ENCODE measurements at regions of chr11 and their contacts with region 1.

Region 1: DNA sequence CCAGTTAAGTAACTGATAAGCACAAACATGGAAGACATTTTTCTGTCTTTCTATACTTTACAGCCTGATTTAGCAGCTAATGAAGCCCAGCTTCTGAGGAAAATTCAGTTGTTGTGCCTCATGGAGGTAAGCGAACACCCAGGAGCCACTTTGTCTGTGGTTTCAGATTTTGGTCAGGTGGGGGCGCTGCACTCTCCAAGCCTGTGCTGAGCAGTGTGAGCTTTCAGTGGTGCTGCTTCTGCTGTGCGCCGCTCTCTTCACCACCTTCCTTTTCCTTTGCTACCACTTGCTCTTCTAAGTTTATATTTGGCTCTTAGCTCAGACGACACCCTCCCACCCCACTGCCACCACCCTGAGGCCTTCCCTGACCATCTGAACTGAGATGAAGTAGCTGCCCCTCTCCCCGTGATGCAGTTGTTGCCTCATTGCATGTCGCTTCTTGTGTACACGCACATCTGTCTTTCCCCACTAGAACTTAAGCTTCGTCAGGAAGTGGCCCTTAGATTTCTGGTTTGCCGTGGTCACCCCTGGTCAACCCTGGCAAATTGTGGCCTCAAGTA is 14.0 kb downstream of the PSMD13 start:
- DNase-seq: peak; percentile 91
- ATAC-seq: peak; percentile 98
- H3K4me3 Mint-ChIP-seq: no peak overlapping the region
- H3K27ac Mint-ChIP-seq: peak overlapping the region; percentile 82
- H3K4me1 Mint-ChIP-seq: peaks cover 18% of the 10 kb centered on the region
- H3K27me3 Mint-ChIP-seq: no peaks in the 10 kb centered on the region
- CTCF ChIP-seq: peak; percentile 83

Region 2: DNA sequence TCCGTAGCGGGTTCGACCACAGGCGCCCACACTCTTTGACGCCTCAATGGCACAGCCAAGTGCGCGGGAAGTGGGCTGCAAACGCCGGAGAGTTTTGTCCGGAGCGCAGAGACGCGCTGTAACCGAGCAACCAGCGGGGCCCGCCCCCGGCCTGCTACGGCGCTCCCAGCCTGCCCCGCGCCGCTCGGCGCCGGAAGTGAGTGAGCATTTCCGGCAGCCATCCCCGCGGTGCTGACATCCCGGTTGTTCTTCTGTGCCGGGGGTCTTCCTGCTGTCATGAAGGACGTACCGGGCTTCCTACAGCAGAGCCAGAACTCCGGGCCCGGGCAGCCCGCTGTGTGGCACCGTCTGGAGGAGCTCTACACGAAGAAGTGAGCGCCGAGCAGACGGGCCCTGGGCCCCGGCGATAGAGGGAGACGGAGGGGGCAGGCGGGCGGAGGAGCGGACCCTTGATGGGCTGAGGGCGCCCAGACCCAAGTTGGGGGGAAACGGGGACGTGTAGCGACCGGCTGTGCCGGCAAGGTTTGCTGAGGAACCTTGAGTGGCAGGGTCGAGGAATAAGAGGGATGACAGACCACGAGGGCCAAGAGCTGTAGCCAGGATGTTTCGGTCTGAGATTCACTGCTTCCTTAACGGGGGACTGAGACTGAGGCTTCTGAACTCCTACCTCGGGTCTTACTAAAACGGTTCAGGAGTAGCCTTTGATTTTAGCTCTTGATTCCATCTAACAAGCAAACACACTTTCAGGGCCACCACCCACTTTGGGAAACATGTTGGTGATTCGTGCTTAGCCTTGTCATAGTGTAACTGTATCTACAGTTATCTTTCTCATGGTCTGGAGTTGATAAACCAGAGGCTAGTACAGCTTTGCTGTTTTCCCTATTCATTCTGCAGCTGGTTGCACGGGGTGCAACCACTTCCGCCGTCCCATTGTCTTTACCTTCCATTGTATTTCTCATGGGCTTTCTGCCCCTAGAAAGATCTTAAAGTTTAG is 13.7 kb before region 1 on chr11 and contains the start of gene PSMD13:
- CTCF ChIA-PET with region 1: interaction called, 68 read pairs
- POLR2A ChIA-PET with region 1: interaction called, 24 read pairs
- intact Hi-C with region 1: no loop called
- DNase-seq: peak; percentile 94
- ATAC-seq: peak; percentile 87
- H3K4me3 Mint-ChIP-seq: peak within 1 kb of the TSS; percentile 95
- H3K27ac Mint-ChIP-seq: peak within 1 kb of the TSS; percentile 99
- H3K4me1 Mint-ChIP-seq: peaks cover 43% of the 10 kb centered on the region
- H3K27me3 Mint-ChIP-seq: no peaks in the 10 kb centered on the region
- CTCF ChIP-seq: no peak
- total RNA-seq, gene PSMD13: 220 to 228 TPM

Region 3: DNA sequence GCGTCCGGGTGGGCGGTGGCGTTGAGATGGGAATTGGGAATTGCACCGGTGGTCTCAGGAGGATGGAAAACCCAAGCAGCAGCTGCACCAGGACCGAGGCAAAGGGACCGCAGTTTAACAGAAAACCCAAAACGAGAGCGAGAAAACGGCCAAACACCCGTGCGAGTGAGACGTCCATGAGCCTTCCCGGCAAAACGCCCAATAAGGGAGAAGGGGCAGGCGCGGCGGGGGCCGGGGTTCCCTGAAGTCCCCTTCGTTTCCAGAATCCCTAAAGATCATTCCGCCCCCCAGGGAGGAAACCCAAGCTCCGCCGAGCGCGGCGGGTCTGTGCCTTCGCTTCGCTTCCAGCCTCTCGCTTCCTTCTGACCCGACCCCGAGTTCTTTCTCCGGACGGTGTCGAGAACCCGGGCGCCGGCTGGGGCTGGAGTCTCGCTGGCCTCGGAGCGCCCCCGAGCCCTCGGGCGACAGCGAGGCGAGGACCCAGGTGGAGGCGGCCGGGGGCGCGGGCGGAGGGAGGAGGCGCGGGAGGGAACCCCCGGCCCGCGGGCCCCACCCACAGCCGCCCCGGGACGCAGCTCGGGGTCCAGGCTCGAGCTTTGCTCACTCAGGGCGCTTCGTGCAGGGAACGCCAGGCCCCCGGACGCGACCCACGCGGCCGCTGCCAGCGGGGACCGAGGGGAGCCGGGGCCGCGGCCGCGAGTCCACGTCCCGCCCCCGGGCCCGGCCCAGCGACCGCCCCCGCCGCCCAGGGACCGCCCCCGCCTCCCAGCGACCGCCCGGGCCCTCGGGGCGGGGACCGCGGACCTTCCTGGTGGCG is 37.7 kb after region 1 on chr11 and contains the start of gene PGGHG:
- CTCF ChIA-PET with region 1: interaction called, 71 read pairs
- POLR2A ChIA-PET with region 1: interaction called, 3 read pairs
- intact Hi-C with region 1: no loop called
- DNase-seq: peak; percentile 56
- ATAC-seq: peak; percentile 14
- H3K4me3 Mint-ChIP-seq: peak within 1 kb of the TSS; percentile 97
- H3K27ac Mint-ChIP-seq: peak within 1 kb of the TSS; percentile 98
- H3K4me1 Mint-ChIP-seq: peaks cover 51% of the 10 kb centered on the region
- H3K27me3 Mint-ChIP-seq: no peaks in the 10 kb centered on the region
- CTCF ChIP-seq: no peak
- total RNA-seq, gene PGGHG: 298 to 308 TPM

Region 4: GRCh38 chr11:313787-314547 is 63.1 kb after region 1 on chr11 and contains the start of gene IFITM1:
- CTCF ChIA-PET with region 1: interaction called, 18 read pairs
- POLR2A ChIA-PET with region 1: interaction called, 7 read pairs
- intact Hi-C with region 1: no loop called
- DNase-seq: peak; percentile 79
- ATAC-seq: peak; percentile 45
- H3K4me3 Mint-ChIP-seq: peak within 1 kb of the TSS; percentile 83
- H3K27ac Mint-ChIP-seq: peak within 1 kb of the TSS; percentile 91
- H3K4me1 Mint-ChIP-seq: peaks cover 34% of the 10 kb centered on the region
- H3K27me3 Mint-ChIP-seq: no peaks in the 10 kb centered on the region
- CTCF ChIP-seq: no peak
- total RNA-seq, gene IFITM1: 296 to 304 TPM

Region 5: DNA sequence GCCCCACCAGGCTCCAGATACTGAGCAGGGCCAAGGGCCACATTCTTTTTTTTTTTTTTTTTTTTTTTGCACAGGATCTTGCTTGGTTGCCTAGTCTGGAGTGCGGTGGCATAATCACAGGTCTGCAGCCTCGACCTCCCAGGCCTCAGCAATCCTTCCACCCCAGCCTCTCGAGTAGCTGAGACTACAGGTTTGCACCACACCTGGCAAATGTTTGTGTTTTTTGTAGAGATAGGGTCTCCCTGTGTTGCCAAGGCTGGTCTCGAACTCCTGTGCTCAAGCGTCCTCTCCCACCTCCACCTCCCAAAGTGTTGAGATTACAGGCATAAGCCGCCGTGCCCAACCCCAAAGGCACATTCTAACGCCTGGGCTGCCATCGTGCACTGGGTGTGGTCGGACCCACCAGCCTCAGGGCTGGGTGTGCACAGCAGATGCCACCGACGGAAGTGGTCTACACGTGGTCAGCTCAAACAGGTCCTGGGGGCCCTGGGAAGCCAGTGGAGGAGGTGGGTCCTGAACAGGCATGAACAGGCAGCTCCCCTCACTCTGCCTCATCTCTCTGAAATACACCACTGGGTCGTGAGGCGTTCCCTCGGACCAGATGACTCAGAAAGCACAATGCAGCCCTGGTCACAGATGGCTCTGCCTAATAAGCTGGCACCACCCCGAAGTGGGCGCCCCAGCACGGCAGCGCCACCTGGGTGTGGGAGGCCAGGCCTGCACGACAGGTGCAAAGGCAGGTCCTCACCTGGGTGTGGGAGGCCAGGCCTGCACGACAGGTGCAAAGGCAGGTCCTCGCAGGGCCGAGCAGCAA is 113.3 kb after region 1 on chr11:
- CTCF ChIA-PET with region 1: interaction called, 18 read pairs
- POLR2A ChIA-PET with region 1: interaction called, 5 read pairs
- intact Hi-C with region 1: no loop called
- DNase-seq: peak; percentile 72
- ATAC-seq: peak; percentile 81
- H3K4me3 Mint-ChIP-seq: no peak overlapping the region
- H3K27ac Mint-ChIP-seq: no peak overlapping the region
- H3K4me1 Mint-ChIP-seq: peaks cover 7% of the 10 kb centered on the region
- H3K27me3 Mint-ChIP-seq: peaks cover 27% of the 10 kb centered on the region
- CTCF ChIP-seq: peak; percentile 65

Region 6: DNA sequence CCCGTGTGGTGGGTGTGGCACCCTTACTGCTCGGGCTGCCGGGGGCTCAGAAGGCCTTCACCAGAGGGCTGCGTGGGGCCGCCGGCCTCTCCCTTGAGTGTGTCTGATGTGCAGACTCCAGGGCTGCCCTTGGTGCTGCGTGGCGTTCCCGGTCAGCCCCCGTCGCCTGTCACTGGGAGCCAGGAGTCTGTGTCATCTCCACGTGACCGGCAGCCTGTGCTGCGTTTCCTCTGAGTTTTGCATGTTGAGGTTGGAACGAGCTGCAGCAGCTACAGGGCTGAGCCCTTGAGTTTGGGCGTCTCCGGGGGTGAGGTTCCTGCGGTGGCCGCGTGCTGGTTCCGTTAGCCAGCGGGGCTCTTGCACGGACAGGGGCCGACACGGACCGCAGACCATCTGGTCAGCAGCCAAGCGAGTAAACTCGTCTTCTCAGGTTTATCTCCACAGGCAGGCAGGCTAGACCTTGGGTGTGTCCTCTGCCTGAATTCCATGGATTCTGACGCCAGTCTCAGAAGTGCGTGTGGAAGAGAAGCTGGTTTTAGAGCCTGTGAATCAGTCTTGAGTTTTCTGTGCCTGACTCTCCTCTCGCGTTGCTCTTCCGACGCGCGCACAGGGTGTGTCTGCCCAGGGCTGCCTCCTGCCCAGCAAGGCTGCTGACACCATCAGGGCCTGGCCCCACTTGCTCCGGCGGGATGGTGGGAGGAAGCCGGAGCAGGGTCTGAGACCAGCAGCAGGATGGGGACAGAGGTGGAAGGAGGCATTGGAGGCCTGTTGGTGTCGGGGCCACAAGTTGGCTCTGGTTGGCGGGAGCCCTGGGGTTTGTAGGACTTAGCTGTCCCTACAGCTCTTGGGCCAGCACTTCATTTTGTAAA is 209.7 kb after region 1 on chr11:
- CTCF ChIA-PET with region 1: no interaction called
- POLR2A ChIA-PET with region 1: no interaction called
- intact Hi-C with region 1: no loop called
- DNase-seq: no peak
- ATAC-seq: no peak
- H3K4me3 Mint-ChIP-seq: no peak overlapping the region
- H3K27ac Mint-ChIP-seq: no peak overlapping the region
- H3K4me1 Mint-ChIP-seq: peaks cover 23% of the 10 kb centered on the region
- H3K27me3 Mint-ChIP-seq: no peaks in the 10 kb centered on the region
- CTCF ChIP-seq: no peak

Region 7: GRCh38 chr11:548700-549603 is 298.1 kb after region 1 on chr11:
- CTCF ChIA-PET with region 1: no interaction called
- POLR2A ChIA-PET with region 1: no interaction called
- intact Hi-C with region 1: no loop called
- DNase-seq: no peak
- ATAC-seq: no peak
- H3K4me3 Mint-ChIP-seq: no peak overlapping the region
- H3K27ac Mint-ChIP-seq: no peak overlapping the region
- H3K4me1 Mint-ChIP-seq: no peaks in the 10 kb centered on the region
- H3K27me3 Mint-ChIP-seq: no peaks in the 10 kb centered on the region
- CTCF ChIP-seq: no peak